Caco-2 (cell line): ENCODE measurements at regions of chr3 and their contacts with region 1.

Region 1: DNA sequence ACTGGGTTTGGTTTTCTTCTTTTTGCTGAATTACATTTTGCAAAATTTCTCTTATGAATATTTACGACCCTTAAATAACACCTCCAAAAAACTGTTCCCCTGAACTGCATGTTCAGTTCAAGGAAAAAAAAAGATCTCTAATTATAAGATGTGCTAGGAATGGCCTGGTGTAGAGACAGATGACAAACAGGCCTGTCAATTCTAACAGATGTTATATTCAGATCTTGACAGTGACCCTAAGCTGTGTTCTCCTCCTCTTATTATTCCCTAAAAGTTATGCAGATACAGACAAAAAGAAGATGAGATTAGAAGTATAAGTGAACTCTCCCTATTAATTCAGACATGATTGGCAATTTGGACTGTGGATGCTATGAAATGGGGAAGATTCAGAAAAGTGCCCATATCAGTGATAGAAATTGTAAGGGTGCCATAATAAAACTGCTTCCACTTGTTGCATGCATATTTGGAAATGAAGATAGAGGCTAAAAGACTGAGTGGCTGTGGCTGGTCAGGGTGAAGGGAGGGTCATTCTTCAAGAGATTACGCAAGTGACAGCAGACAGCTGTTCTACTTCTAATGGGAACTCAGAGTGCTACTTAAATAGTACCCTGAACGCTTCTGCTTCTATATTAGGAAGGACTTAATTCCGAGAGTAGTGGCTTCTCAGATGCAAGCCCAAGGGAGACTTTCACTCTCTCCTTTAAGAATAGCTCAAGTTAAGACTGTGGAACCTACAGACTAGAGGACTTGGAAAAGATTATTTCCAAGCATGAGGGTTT is 75.5 kb downstream of the ADAMTS9 start:
- DNase-seq: peak; percentile 37 to 50
- H3K4me3 ChIP-seq: no peak overlapping the region
- H3K4me3 Mint-ChIP-seq: peak overlapping the region; percentile 68
- H3K27ac Mint-ChIP-seq: peak overlapping the region; percentile 90
- H3K4me1 ChIP-seq: peaks cover 27% of the 10 kb centered on the region
- H3K4me1 Mint-ChIP-seq: peaks cover 20% of the 10 kb centered on the region
- H3K27me3 ChIP-seq: no peaks in the 10 kb centered on the region; the same call in 1 of the 2 replicates
- H3K27me3 Mint-ChIP-seq: no peaks in the 10 kb centered on the region
- CTCF ChIP-seq: no peak

Region 2: DNA sequence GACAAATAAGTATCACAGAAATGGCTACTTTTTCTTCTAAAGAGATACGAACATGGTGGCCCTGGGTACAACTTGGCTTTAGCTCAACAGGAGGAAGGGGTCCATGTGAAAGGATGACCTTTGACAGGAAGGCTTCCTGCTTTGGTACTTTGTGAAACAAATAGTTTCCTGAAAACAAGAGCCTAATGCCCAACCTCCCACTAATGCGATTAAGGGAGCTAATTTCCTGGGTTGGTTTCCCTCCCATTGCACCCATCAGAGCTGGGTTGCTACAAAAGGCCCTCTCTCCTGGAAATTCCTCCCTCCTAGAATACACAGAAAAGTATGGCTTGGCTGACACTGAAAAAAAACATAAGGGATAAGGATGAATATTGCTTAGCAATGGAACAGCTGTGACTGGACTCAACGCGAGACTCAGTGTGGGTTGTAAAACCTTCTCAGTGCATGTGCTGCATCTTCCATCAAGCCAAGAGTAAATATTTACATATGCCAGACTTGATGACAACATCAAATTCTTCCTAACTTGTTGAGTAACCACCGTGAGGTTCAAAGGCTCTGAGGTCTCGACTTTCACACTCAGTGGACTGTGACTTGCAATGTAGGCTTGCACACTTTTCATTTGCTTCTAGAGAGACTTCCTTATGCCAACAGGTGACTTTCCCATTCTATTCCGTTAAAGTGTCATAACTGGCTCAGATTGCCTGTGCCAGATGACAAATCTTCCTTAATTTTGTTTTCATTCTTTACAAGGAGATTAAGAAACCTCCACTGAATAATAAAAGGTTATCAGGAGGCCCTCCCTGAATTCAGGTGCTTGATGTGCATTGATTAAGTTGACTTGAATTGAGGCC is 15.4 kb after region 1 on chr3:
- CTCF ChIA-PET with region 1: no interaction called
- POLR2A ChIA-PET with region 1: no interaction called
- intact Hi-C with region 1: loop called (anchors 1 kb)
- DNase-seq: peak; percentile 74 to 77
- H3K4me3 ChIP-seq: no peak overlapping the region
- H3K4me3 Mint-ChIP-seq: no peak overlapping the region
- H3K27ac Mint-ChIP-seq: peak overlapping the region; percentile 51
- H3K4me1 ChIP-seq: peaks cover 40% of the 10 kb centered on the region
- H3K4me1 Mint-ChIP-seq: peaks cover 31% of the 10 kb centered on the region
- H3K27me3 ChIP-seq: no peaks in the 10 kb centered on the region
- H3K27me3 Mint-ChIP-seq: no peaks in the 10 kb centered on the region
- CTCF ChIP-seq: no peak

Region 3: DNA sequence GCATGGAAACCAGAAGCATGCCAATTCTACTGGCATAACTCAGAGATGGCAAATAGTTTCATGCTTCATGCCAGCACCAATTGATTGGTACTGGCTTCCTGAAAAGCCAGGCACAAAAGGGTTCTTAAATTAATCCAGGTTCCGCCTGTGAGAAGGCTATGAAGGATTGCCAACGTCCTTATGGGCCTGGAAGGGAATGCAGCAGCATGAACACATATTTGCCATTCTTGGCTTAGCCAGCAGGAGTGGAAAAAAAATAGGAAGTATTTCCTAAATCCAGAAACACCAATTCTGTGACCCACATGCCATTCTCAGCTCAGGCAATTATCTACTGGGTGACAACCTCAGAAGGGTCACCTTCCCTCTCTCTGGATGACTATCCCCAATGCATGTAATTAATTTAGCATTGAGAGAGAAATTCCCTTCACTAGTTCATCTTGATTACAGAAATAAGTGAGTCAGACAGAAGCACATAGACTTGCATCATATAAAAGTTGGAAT is 39.5 kb after region 1 on chr3:
- CTCF ChIA-PET with region 1: no interaction called
- POLR2A ChIA-PET with region 1: no interaction called
- intact Hi-C with region 1: loop called (anchors 1 kb)
- DNase-seq: no peak
- H3K4me3 ChIP-seq: no peak overlapping the region
- H3K4me3 Mint-ChIP-seq: no peak overlapping the region
- H3K27ac Mint-ChIP-seq: no peak overlapping the region
- H3K4me1 ChIP-seq: peaks cover 4% of the 10 kb centered on the region; the same call in 1 of the 2 replicates
- H3K4me1 Mint-ChIP-seq: peaks cover 13% of the 10 kb centered on the region
- H3K27me3 ChIP-seq: no peaks in the 10 kb centered on the region
- H3K27me3 Mint-ChIP-seq: no peaks in the 10 kb centered on the region
- CTCF ChIP-seq: no peak